HAP-1 (cell line): ENCODE measurements at regions of chr18 and their contacts with region 1.

Region 1: DNA sequence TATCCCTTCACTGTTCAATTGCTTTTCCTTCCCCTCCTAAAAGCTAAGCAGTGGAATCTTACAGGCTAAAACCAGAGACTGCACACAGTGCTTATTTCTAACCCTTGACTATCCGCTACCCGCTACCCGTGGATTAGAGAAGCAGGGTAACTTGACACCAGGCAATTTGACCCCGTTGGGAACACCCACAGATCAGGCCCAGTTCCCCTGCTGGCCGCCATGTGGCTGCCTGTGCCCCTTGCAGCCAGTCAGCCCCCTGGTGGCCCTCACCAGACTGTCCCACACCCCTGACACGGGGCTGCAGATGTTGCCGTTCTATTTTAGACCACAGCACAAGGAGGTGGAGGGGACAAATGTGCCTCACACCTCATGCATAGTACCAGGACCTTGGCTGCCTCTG is 74.8 kb downstream of the TXNL1 start:
- DNase-seq: peak; percentile 36 to 72
- H3K4me3 ChIP-seq: no peak overlapping the region
- H3K4me1 ChIP-seq: peaks cover 10% of the 10 kb centered on the region
- H3K27me3 ChIP-seq: no peaks in the 10 kb centered on the region

Region 2: GRCh38 chr18:55234366-55235093 is 1329.0 kb before region 1 on chr18:
- in situ Hi-C with region 1: loop called (anchors 25 kb)
- DNase-seq: peak; percentile 81 to 85
- H3K4me3 ChIP-seq: no peak overlapping the region
- H3K4me1 ChIP-seq: peaks cover 7% of the 10 kb centered on the region; the same call in 1 of the 2 replicates
- H3K27me3 ChIP-seq: no peaks in the 10 kb centered on the region

Region 3: DNA sequence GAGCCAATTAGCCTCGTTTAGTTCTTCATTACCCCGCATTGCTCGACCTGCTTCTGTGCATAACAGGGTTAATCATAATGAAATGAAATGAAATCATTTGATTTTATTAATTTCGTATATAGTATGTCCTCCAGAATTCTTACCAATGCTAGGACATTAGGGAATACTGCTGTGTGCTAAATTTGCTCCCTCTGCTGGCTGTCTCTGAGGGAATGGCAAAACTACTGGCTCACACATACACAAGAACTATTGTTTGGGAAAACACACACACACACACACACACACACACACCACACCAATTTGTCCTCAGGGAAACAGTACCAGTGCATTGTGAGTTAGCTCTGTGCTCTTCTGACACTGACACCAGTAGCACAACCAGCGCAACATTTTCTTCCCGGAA is 702.3 kb before region 1 on chr18:
- in situ Hi-C with region 1: loop called (anchors 25 kb)
- DNase-seq: peak; percentile 14 to 39
- H3K4me3 ChIP-seq: no peak overlapping the region
- H3K4me1 ChIP-seq: peaks cover 25% of the 10 kb centered on the region
- H3K27me3 ChIP-seq: peaks cover 81% of the 10 kb centered on the region

Region 4: GRCh38 chr18:56327191-56327885 is 236.2 kb before region 1 on chr18:
- in situ Hi-C with region 1: loop called (anchors 25 kb)
- DNase-seq: no peak
- H3K4me3 ChIP-seq: no peak overlapping the region
- H3K4me1 ChIP-seq: peaks cover 21% of the 10 kb centered on the region
- H3K27me3 ChIP-seq: no peaks in the 10 kb centered on the region

Region 5: GRCh38 chr18:56374007-56374655 is 189.4 kb before region 1 on chr18:
- in situ Hi-C with region 1: no loop called
- DNase-seq: no peak
- H3K4me3 ChIP-seq: no peak overlapping the region
- H3K4me1 ChIP-seq: no peaks in the 10 kb centered on the region
- H3K27me3 ChIP-seq: no peaks in the 10 kb centered on the region